ENCODE measurements at regions of chr20 and their contacts with region 1.

Region 1: DNA sequence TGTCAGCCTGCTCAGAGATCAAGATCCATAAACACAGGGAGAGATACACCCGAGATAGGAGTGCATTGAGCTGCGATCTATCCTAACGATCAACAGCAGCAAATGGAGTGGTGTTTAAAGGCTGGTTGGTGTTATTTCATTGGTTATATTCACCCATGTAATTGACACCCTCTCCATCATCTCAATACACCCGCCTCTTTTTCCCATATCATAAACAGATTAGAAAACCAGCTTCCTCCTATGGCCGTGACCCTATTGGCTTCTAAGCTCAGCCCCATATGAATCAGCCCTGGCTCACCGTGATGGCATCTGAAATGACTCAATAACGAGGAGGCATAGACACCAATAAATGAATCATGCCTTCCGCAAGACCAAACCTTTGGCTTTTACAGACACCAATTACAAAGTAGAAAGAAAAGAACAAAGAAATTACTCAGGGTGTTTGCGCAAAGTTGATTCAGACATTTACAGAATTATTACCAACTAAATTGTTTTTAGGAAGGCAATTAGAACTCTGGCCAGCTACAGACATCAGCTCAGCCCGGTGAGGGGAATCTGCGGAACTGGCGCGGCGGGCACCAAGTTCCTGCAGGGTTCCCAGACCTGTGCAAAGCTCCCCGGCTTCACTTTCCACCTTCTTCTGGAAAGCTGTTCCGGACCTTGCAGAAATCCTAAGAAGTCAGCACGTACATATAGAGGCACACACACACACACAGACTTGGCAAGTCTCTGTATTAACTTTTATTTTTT is 11.5 kb downstream of the PMEPA1 start:
- DNase-seq: peak; percentile 92
- H3K4me3 Mint-ChIP-seq: no peak overlapping the region
- H3K27ac Mint-ChIP-seq: peak overlapping the region; percentile 85
- H3K4me1 Mint-ChIP-seq: peaks cover 44% of the 10 kb centered on the region
- H3K27me3 Mint-ChIP-seq: no peaks in the 10 kb centered on the region

Region 2: GRCh38 chr20:57391074-57391554 is 307.2 kb before region 1 on chr20 and contains the start of gene RBM38:
- CTCF ChIA-PET with region 1: no interaction called
- intact Hi-C with region 1: loop called (anchors 5 kb)
- DNase-seq: peak; percentile 80
- H3K4me3 Mint-ChIP-seq: peak within 1 kb of the TSS; percentile 90
- H3K27ac Mint-ChIP-seq: peak within 1 kb of the TSS; percentile 97
- H3K4me1 Mint-ChIP-seq: peaks cover 46% of the 10 kb centered on the region
- H3K27me3 Mint-ChIP-seq: no peaks in the 10 kb centered on the region
- total RNA-seq, gene RBM38: 60.3 to 63.1 TPM

Region 3: GRCh38 chr20:57589728-57590484 is 108.4 kb before region 1 on chr20:
- CTCF ChIA-PET with region 1: no interaction called
- intact Hi-C with region 1: no loop called
- DNase-seq: no peak
- H3K4me3 Mint-ChIP-seq: no peak overlapping the region
- H3K27ac Mint-ChIP-seq: no peak overlapping the region
- H3K4me1 Mint-ChIP-seq: no peaks in the 10 kb centered on the region
- H3K27me3 Mint-ChIP-seq: peaks cover 5% of the 10 kb centered on the region

Region 4: GRCh38 chr20:57628047-57628961 is 70.0 kb before region 1 on chr20:
- CTCF ChIA-PET with region 1: no interaction called
- intact Hi-C with region 1: loop called (anchors 1 kb)
- DNase-seq: peak; percentile 84
- H3K4me3 Mint-ChIP-seq: peak overlapping the region; percentile 83
- H3K27ac Mint-ChIP-seq: peak overlapping the region; percentile 99
- H3K4me1 Mint-ChIP-seq: peaks cover 48% of the 10 kb centered on the region
- H3K27me3 Mint-ChIP-seq: no peaks in the 10 kb centered on the region

Region 5: DNA sequence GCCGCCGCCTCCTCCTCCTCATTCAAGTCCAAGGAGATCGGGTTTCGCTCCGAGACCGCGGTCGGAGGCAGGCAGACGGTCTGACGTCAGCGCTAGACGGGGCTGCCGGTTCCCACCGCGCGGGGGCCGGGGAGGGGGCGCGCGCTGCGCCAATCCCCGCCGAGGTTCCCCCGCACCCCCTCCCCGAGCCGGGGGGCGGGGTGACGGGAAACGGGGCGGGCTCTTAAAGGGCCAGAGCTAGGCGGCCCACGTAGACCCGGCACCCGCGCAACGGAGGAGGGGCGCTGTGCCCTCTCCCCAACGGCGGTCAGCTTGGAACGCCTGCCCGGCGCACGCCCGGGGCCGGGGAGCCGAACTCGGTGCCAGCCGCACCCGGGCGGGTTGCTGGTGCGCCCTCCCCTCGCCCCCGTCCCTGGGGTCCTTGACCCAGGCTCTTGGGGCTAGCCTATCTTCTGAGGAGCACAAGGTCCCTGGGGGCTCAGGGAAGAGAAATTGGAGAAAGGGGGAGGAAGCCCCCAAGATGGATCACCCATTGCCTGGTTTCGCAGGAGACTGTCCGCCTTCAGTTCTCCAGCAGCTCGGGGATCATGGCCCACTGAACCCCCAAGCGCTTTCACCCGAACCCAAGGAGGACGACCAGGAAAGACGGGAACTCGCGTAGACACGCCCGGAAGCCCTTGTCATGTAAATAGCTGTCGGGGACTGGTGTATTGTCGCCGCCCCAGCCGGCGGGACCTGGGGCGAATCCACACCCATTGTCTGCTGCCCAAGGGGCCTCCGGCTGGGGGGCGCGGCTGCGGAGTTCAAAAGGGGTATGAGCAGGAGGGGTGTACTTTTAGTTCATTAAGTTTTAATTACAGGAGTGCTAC is 11.9 kb after region 1 on chr20 and contains the start of gene PMEPA1:
- CTCF ChIA-PET with region 1: interaction called, 3 read pairs
- intact Hi-C with region 1: loop called (anchors 1 kb)
- DNase-seq: peak; percentile 91
- H3K4me3 Mint-ChIP-seq: peak within 1 kb of the TSS; percentile 79
- H3K27ac Mint-ChIP-seq: peak within 1 kb of the TSS; percentile 68
- H3K4me1 Mint-ChIP-seq: peaks cover 17% of the 10 kb centered on the region
- H3K27me3 Mint-ChIP-seq: peaks cover 6% of the 10 kb centered on the region
- total RNA-seq, gene PMEPA1: 2.0 to 2.2 TPM

Region 6: DNA sequence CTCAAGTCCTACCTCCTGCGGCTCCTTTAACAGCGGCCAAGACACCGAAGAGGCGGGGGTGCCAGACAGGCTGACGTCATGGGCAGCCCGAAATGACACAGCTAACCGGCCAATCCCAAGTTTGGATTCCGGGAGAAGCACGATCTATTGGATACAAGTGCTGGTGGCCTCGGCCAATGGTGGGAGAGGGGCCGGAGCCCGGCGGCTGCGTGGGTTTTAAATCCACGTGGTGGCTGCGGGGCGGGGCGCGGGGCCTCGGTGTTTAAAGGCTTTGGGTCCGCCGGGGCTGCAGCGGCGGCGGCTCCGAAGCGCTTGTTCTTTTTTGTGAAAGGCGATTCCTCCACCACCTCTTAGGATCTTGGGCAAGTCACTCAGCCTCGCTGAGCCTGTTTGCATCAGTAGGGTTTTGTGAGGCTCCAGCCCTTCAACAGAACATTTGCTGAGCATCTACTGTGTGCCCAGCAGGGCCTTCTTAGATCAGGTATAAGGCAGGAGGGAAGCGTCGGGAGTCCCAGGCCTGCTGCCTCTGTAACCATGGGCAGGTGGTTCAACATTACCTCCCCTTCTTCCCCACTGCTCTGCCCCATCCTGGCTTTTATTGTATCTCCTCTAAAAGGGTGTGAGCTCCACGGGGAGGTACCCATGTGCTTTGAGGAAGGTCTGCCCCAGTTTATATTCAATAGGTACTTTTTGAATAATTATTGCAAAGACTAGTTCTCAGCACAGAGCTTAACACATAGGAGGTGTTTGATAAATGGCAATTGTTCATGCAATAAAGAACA is 20.4 kb after region 1 on chr20:
- CTCF ChIA-PET with region 1: interaction called, 3 read pairs
- intact Hi-C with region 1: loop called (anchors 1 kb)
- DNase-seq: peak; percentile 96
- H3K4me3 Mint-ChIP-seq: peak overlapping the region; percentile 46
- H3K27ac Mint-ChIP-seq: no peak overlapping the region
- H3K4me1 Mint-ChIP-seq: peaks cover 8% of the 10 kb centered on the region
- H3K27me3 Mint-ChIP-seq: no peaks in the 10 kb centered on the region

Region 7: DNA sequence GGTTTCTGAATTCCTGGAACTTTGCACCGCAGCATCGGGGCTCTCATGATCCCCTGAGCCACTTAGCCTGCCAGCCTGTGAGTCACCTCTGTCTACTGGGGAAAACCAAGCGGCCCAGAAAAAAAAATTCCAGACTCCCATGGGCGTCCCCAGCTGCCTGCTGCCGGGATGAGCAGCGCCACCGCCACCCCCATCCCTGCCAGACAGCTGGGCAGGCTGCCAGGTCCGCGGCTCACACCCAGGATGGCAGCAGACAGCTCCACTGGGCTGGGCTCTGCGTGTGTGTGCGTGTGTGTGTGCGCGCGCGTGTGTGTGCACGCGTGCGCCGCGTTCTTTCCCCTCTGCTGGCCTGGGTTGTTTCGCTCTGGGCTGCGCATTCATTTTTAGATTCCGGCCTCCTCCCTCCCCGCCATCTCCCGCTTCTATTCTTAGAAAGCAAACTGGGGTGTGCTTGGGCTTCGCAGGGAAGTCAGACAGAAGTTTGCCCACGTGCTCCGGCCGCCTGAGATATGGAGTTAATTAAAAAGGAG is 50.4 kb after region 1 on chr20:
- CTCF ChIA-PET with region 1: no interaction called
- intact Hi-C with region 1: loop called (anchors 1 kb)
- DNase-seq: peak; percentile 75
- H3K4me3 Mint-ChIP-seq: peak overlapping the region; percentile 12
- H3K27ac Mint-ChIP-seq: no peak overlapping the region
- H3K4me1 Mint-ChIP-seq: peaks cover 16% of the 10 kb centered on the region
- H3K27me3 Mint-ChIP-seq: peaks cover 8% of the 10 kb centered on the region

Region 8: GRCh38 chr20:58014628-58015315 is 316.5 kb after region 1 on chr20:
- CTCF ChIA-PET with region 1: no interaction called
- intact Hi-C with region 1: loop called (anchors 5 kb)
- DNase-seq: peak; percentile 57
- H3K4me3 Mint-ChIP-seq: no peak overlapping the region
- H3K27ac Mint-ChIP-seq: peak overlapping the region; percentile 15
- H3K4me1 Mint-ChIP-seq: peaks cover 22% of the 10 kb centered on the region
- H3K27me3 Mint-ChIP-seq: peaks cover 13% of the 10 kb centered on the region

Region 9: DNA sequence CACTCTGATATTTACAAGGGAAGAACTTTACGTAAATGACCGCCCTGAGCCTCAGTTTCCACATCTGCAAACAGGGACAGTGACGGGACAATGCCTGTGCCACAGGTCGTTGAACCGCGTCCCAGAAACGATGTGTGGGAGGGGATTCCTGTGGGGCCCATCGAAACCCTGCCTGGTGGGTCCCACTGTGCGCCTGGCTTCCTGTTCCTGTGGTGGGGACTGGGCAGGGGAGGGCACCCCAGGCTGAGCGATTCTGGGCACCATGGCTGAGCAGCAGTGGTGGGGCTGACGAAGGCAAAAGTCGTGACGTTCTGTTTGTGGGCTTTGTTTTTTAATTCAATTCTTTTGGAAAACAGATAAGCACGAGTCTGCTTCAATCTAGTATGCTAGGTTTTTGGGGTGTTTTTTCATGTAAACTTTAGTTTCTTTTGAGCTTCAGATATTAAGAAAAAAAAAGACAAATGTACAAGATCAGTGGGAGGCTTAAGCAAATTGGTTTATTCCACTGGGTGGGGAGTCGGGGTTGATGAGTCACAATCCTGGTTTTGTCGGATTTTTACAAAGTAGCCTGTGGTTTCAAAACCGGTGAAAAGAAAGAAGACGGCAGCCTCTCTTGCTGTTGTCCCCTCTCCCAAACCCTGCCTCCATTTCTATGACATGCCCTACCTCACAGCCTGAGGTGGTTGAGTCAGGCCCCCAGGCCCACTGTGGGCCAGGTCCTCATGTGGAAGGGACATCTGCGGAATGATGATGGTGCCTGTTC is 1112.0 kb after region 1 on chr20:
- CTCF ChIA-PET with region 1: no interaction called
- intact Hi-C with region 1: no loop called
- DNase-seq: no peak
- H3K4me3 Mint-ChIP-seq: no peak overlapping the region
- H3K27ac Mint-ChIP-seq: no peak overlapping the region
- H3K4me1 Mint-ChIP-seq: no peaks in the 10 kb centered on the region
- H3K27me3 Mint-ChIP-seq: peaks cover 2% of the 10 kb centered on the region

Measured in activated naive CD4-positive, alpha-beta T cell treated with anti-CD3 and anti-CD28 coated beads for 36 hours (primary cell).